IMR-90 (cell line): ENCODE measurements at regions of chr21 and their contacts with region 1.

Region 1: DNA sequence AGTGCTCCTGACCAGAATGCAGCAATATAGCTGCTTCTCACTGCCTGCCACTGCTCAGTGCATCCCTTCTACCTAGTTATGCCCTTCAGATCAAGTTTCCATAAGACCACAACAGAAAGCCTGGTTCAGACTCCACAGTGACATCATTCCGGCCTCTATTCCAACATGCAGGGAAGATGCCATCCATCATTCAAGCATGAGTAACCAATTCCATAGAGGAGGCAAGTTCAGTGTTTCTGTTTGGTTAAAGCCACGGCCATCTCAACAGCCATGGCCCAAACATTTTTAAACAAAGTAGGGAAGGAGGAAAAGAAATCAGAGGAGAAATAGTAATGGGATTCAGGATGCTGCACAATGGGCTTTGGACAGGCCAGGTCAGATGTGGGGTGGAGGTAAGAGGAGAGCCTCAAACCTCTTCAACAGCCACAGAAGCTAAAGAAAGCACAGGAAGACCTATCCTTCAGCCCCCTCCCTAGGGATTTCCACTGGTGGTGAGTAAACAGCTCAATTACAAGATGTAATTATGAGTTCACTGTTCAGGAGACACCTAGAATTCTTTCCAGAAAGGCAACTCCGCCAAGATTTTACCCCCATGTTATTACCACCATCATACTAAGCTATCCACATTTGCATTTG is 484.9 kb downstream of the SETD4 start:
- DNase-seq: peak; percentile 96
- ATAC-seq: peak; percentile 81
- H3K4me3 ChIP-seq: no peak overlapping the region
- H3K27ac ChIP-seq: peak overlapping the region; percentile 16; the same call in 1 of the 2 replicates
- H3K4me1 ChIP-seq: peaks cover 26% of the 10 kb centered on the region
- H3K27me3 ChIP-seq: no peaks in the 10 kb centered on the region
- CTCF ChIP-seq: no peak
- POLR2A ChIP-seq: no peak
- RAD21 ChIP-seq: peak; percentile 19; the same call in 1 of the 2 replicates

Region 2: GRCh38 chr21:35508139-35508888 is 67.1 kb before region 1 on chr21:
- CTCF ChIA-PET with region 1: no interaction called
- POLR2A ChIA-PET with region 1: no interaction called
- dilution Hi-C with region 1: no loop called
- in situ Hi-C with region 1: no loop called
- intact Hi-C with region 1: loop called (anchors 10 kb)
- DNase-seq: peak; percentile 65
- ATAC-seq: peak; percentile 75
- H3K4me3 ChIP-seq: no peak overlapping the region
- H3K27ac ChIP-seq: no peak overlapping the region
- H3K4me1 ChIP-seq: peaks cover 10% of the 10 kb centered on the region
- H3K27me3 ChIP-seq: no peaks in the 10 kb centered on the region
- CTCF ChIP-seq: peak; percentile 36
- POLR2A ChIP-seq: no peak
- RAD21 ChIP-seq: peak; percentile 44; the same call in 1 of the 2 replicates